ENCODE measurements at regions of chr16 and their contacts with region 1.

Region 1: GRCh38 chr16:54286090-54286993 is at the start of gene IRX3:
- DNase-seq: no peak
- H3K4me3 ChIP-seq: peak within 1 kb of the TSS; percentile 30 to 53 (median 47)
- H3K27ac ChIP-seq: peak within 1 kb of the TSS in 1 of 4 donors; percentile 49
- H3K4me1 ChIP-seq: peaks cover 0 to 76% (median 69%) of the 10 kb centered on the region in 4 donors
- H3K27me3 ChIP-seq: peaks cover 87 to 100% (median 99%) of the 10 kb centered on the region in 3 donors
- CTCF ChIP-seq: no peak
- EP300 ChIP-seq: no peak
- POLR2A ChIP-seq: no peak
- total RNA-seq, gene IRX3: 0.27 to 0.33 TPM in 2 of 4 donors, not detected in the others

Region 2: GRCh38 chr16:53773150-53773846 is 513.0 kb before region 1 on chr16:
- intact Hi-C with region 1: loop called (anchors 10 kb)
- DNase-seq: no peak
- H3K4me3 ChIP-seq: no peak overlapping the region
- H3K27ac ChIP-seq: peak overlapping the region in 1 of 4 donors; percentile 20
- H3K4me1 ChIP-seq: peaks cover 0 to 71% (median 51%) of the 10 kb centered on the region in 4 donors
- H3K27me3 ChIP-seq: no peaks in the 10 kb centered on the region
- CTCF ChIP-seq: peak in 3 of 4 experiments; percentile 19 to 54 (median 20)
- EP300 ChIP-seq: no peak
- POLR2A ChIP-seq: no peak

Region 3: GRCh38 chr16:53892155-53892554 is 394.2 kb before region 1 on chr16:
- intact Hi-C with region 1: loop called (anchors 10 kb)
- DNase-seq: no peak
- H3K4me3 ChIP-seq: no peak overlapping the region
- H3K27ac ChIP-seq: no peak overlapping the region
- H3K4me1 ChIP-seq: peaks cover 0 to 16% (median 12%) of the 10 kb centered on the region in 4 donors
- H3K27me3 ChIP-seq: no peaks in the 10 kb centered on the region
- CTCF ChIP-seq: peak; percentile 15 to 66 (median 46)
- EP300 ChIP-seq: no peak
- POLR2A ChIP-seq: no peak

Region 4: DNA sequence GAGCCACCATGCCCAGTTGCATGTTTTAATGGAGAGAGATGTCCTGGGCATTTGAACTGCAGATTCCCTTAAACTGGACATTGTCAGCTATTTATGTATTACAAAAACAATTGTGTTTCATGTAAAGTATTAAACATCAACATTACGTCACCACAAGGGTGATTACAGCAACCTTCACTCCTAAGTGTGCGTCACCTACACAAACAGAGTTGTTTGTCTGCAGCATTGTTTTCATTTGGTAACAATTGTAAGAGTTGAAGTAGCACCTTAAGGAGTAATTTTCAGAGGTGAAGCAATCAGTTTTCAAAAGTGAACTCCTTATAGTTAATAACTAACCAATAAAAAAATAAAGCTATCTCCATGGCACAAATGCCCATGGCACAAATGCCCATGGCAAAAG is 271.2 kb before region 1 on chr16:
- intact Hi-C with region 1: no loop called
- DNase-seq: no peak
- H3K4me3 ChIP-seq: no peak overlapping the region
- H3K27ac ChIP-seq: no peak overlapping the region
- H3K4me1 ChIP-seq: no peaks in the 10 kb centered on the region
- H3K27me3 ChIP-seq: no peaks in the 10 kb centered on the region
- CTCF ChIP-seq: no peak
- EP300 ChIP-seq: no peak
- POLR2A ChIP-seq: no peak

Region 5: GRCh38 chr16:54355251-54355650 is 68.9 kb after region 1 on chr16:
- intact Hi-C with region 1: no loop called
- DNase-seq: no peak
- H3K4me3 ChIP-seq: no peak overlapping the region
- H3K27ac ChIP-seq: no peak overlapping the region
- H3K4me1 ChIP-seq: no peaks in the 10 kb centered on the region
- H3K27me3 ChIP-seq: peaks cover 0 to 29% (median 8%) of the 10 kb centered on the region in 3 donors
- CTCF ChIP-seq: no peak
- EP300 ChIP-seq: no peak
- POLR2A ChIP-seq: no peak

Measured in sigmoid colon (tissue), 7 donors.